A673 (cell line): ENCODE measurements at regions of chrX and their contacts with region 1.

Region 1: DNA sequence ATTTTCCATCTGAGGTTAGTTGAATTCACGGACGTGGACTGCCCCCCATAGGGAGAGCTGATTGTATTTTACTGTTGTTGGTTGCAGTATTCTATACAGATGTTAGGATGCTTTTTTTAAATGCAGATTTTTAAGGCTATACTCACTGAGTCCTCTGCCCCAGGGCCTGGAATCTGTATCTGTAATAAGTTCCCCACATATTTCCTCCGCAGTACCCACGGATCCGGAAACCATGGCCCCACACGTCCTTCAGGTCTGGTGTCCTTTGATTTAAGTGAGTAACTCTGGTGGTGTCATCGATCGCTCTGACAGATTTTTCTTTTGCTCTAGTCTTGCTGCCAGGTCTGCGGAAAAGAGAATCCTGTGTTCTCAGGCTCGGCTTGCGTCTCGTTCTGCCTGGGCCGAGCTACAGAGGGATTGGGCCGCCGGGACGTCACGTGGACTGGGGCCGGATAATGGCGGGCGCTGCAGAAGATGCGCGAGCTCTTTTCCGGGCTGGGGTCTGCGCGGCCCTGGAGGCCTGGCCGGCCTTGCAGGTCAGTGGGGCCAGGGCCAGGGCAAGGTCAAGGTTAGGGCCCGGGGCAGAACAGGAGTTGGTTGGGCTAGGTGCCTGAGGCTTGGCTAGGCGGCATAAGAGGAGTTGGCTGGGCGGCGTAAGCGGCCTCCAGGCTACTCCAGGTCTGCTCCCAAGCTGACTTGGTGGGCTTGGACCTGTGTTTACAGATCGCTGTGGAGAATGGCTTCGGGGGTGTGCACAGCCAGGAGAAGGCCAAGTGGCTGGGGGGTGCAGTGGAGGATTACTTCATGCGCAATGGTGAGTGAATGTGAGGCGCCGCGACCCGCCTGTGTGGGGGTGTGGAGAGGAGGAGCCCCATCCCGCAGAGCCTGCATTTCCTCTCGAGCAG is at the start of gene TSR2:
- DNase-seq: peak; percentile 90
- H3K4me3 ChIP-seq: peak within 1 kb of the TSS; percentile 77
- H3K27ac ChIP-seq: peak within 1 kb of the TSS; percentile 67
- H3K4me1 ChIP-seq: peaks cover 5% of the 10 kb centered on the region
- H3K27me3 ChIP-seq: no peaks in the 10 kb centered on the region
- CTCF ChIP-seq: no peak; the same call in 1 of the 2 replicates
- total RNA-seq, gene TSR2: 40.8 and 41.6 TPM in 2 replicates

Region 2: GRCh38 chrX:54044126-54044876 is 395.9 kb before region 1 on chrX and contains the start of gene PHF8:
- CTCF ChIA-PET with region 1: no interaction called
- POLR2A ChIA-PET with region 1: interaction called, 3 read pairs
- intact Hi-C with region 1: loop called (anchors 5 kb)
- DNase-seq: peak; percentile 95
- H3K4me3 ChIP-seq: peak within 1 kb of the TSS; percentile 60
- H3K27ac ChIP-seq: peak within 1 kb of the TSS; percentile 92
- H3K4me1 ChIP-seq: no peaks in the 10 kb centered on the region
- H3K27me3 ChIP-seq: no peaks in the 10 kb centered on the region
- CTCF ChIP-seq: no peak
- total RNA-seq, gene PHF8: 30.7 and 31.0 TPM in 2 replicates

Region 3: DNA sequence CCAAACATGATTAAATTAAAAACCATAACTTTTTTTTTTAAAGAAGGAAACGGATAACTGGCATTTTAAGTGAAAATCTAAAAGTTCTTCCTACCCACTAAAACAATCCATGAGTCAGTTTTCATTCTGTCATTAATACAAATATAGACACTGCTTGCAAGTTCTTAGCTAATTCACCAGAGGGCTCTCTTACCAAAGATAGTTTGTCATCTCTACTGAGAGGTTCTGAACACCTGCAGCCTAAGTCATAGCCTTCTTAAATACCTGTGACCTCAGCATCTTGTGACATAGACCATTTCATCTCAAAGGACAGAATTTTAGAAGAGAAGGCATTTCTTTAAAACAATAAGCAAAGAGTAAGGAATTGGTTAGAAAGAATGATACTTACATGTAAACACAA is 191.9 kb before region 1 on chrX:
- CTCF ChIA-PET with region 1: interaction called, 5 read pairs
- POLR2A ChIA-PET with region 1: interaction called, 3 read pairs
- intact Hi-C with region 1: loop called (anchors 10 kb)
- DNase-seq: peak; percentile 10
- H3K4me3 ChIP-seq: no peak overlapping the region
- H3K27ac ChIP-seq: no peak overlapping the region
- H3K4me1 ChIP-seq: no peaks in the 10 kb centered on the region
- H3K27me3 ChIP-seq: no peaks in the 10 kb centered on the region
- CTCF ChIP-seq: peak; percentile 45; the same call in 1 of the 2 replicates

Region 4: GRCh38 chrX:54540289-54540688 is 100.1 kb after region 1 on chrX:
- CTCF ChIA-PET with region 1: no interaction called
- POLR2A ChIA-PET with region 1: no interaction called
- intact Hi-C with region 1: no loop called
- DNase-seq: peak; percentile 6
- H3K4me3 ChIP-seq: no peak overlapping the region
- H3K27ac ChIP-seq: no peak overlapping the region
- H3K4me1 ChIP-seq: no peaks in the 10 kb centered on the region
- H3K27me3 ChIP-seq: no peaks in the 10 kb centered on the region
- CTCF ChIP-seq: no peak